Naive thymus-derived CD4-positive, alpha-beta T cell (primary cell): ENCODE measurements at regions of chr3 and their contacts with region 1.

Region 1: DNA sequence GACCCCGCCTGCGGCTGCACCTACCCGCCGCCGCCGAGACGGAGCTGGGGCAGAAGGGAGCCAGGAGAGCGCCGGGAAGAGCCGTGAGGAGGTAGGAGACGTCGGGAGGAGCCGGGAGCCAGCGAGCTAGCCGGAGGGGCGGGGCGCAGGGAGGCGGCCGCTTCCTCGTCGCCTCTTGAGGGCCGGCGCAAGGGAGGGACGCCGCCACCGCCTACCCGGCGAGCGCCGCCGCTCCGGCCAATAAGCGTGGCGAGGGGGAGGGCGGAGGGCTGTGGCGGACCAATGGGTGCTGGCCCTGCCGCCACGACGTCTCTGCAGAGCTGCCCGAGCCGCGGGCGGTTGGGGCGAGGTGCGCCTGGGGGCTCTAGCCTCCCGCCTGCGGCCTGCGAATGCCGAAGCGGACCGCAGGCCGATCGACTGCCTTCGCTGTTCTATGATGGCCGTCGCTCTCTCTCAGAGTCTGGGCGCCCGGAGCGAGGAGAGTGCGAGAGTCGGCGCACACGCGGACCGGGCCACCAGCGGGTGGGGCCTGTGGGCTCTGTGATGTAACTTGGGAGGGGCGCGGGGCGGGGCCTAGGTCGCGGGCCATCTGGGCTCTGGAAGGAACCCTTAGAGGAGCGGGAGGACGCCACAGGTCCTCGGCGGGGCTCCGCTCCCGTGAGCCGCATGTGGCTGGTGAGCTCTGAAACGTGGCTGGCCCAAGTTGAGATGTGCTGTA is 72.7 kb upstream of the MAP4 start:
- DNase-seq: peak; percentile 89 to 96 (median 94)
- ATAC-seq: peak; percentile 97
- H3K4me3 ChIP-seq: peak overlapping the region; percentile 85
- H3K4me3 Mint-ChIP-seq: peak overlapping the region; percentile 90 to 99 (median 96)
- H3K27ac ChIP-seq: peak overlapping the region; percentile 95
- H3K27ac Mint-ChIP-seq: peak overlapping the region; percentile 71 to 99 (median 98)
- H3K4me1 ChIP-seq: peaks cover 7 to 11% of the 10 kb centered on the region in 2 donors
- H3K4me1 Mint-ChIP-seq: peaks cover 14 to 33% (median 29%) of the 10 kb centered on the region in 7 donors
- H3K27me3 ChIP-seq: no peaks in the 10 kb centered on the region
- H3K27me3 Mint-ChIP-seq: peaks cover 0 to 18% (median 0%) of the 10 kb centered on the region in 5 donors

Region 2: DNA sequence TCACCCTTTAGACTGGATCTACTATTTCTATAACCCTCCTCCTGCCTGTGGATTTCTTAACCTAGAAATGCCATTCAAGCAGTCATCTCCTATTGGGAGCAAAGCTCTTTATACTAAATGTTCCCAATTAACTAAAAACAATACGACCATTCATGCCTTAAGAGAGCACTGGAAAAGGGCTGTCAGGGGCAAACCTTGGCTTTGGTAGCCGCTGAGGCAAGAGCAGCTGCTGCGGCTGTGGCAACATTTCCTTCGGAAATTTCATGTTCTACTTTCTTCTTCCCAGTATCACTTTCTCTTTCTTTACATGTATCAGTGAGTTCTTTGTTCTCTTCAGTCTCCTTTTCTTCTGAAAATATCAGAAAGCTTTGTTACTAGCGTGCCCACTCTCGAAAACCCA is 453.9 kb before region 1 on chr3:
- CTCF ChIA-PET with region 1: no interaction called
- POLR2A ChIA-PET with region 1: no interaction called
- intact Hi-C with region 1: no loop called
- DNase-seq: no peak
- ATAC-seq: no peak
- H3K4me3 ChIP-seq: no peak overlapping the region
- H3K4me3 Mint-ChIP-seq: peak overlapping the region in 2 of 10 donors; percentile 0 to 12
- H3K27ac ChIP-seq: no peak overlapping the region
- H3K27ac Mint-ChIP-seq: peak overlapping the region in 3 of 9 donors; percentile 1 to 38 (median 17)
- H3K4me1 ChIP-seq: no peaks in the 10 kb centered on the region
- H3K4me1 Mint-ChIP-seq: peaks cover 0 to 8% (median 3%) of the 10 kb centered on the region in 7 donors
- H3K27me3 ChIP-seq: no peaks in the 10 kb centered on the region
- H3K27me3 Mint-ChIP-seq: no peaks in the 10 kb centered on the region

Region 3: GRCh38 chr3:47802734-47803477 is 286.0 kb before region 1 on chr3 and contains the start of gene DHX30:
- CTCF ChIA-PET with region 1: no interaction called
- POLR2A ChIA-PET with region 1: no interaction called
- intact Hi-C with region 1: loop called in 1 of 2 experiments (anchors 1 kb)
- DNase-seq: peak; percentile 77 to 90 (median 82)
- ATAC-seq: peak; percentile 95
- H3K4me3 ChIP-seq: peak within 1 kb of the TSS; percentile 65
- H3K4me3 Mint-ChIP-seq: peak within 1 kb of the TSS; percentile 89 to 98 (median 95)
- H3K27ac ChIP-seq: peak within 1 kb of the TSS; percentile 92
- H3K27ac Mint-ChIP-seq: peak within 1 kb of the TSS; percentile 92 to 98 (median 95)
- H3K4me1 ChIP-seq: peaks cover 11 to 12% of the 10 kb centered on the region in 2 donors
- H3K4me1 Mint-ChIP-seq: peaks cover 6 to 25% (median 20%) of the 10 kb centered on the region in 7 donors
- H3K27me3 ChIP-seq: no peaks in the 10 kb centered on the region
- H3K27me3 Mint-ChIP-seq: no peaks in the 10 kb centered on the region
- total RNA-seq, gene DHX30: 64.1 to 103 (median 92.0) TPM

Region 4: GRCh38 chr3:47824541-47825473 is 264.1 kb before region 1 on chr3:
- CTCF ChIA-PET with region 1: no interaction called
- POLR2A ChIA-PET with region 1: no interaction called
- intact Hi-C with region 1: loop called in 1 of 2 experiments (anchors 10 kb)
- DNase-seq: peak; percentile 62 to 86 (median 79)
- ATAC-seq: peak; percentile 100
- H3K4me3 ChIP-seq: peak overlapping the region; percentile 79
- H3K4me3 Mint-ChIP-seq: peak overlapping the region; percentile 81 to 94 (median 90)
- H3K27ac ChIP-seq: peak overlapping the region; percentile 88
- H3K27ac Mint-ChIP-seq: peak overlapping the region; percentile 66 to 96 (median 89)
- H3K4me1 ChIP-seq: peaks cover 15% of the 10 kb centered on the region in 2 donors
- H3K4me1 Mint-ChIP-seq: peaks cover 15 to 46% (median 36%) of the 10 kb centered on the region in 7 donors
- H3K27me3 ChIP-seq: no peaks in the 10 kb centered on the region
- H3K27me3 Mint-ChIP-seq: no peaks in the 10 kb centered on the region

Region 5: DNA sequence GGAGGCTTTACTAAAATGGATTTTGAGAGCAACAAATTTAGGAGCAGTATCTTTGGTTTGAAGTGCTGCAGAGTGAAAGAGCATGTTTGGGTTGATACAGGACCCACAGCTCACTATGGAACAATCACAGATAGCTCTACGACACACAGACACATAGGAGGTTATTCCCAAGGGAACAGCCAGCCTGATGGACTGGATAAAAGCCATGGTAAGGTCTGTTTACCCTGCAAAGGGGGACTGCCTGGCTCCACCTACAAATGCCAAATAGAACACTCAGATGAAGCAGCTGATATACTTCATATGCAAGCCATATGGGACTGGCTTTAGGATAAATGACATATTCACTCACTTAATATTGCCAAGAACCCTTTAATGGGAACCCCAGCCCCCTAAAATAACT is 23.9 kb after region 1 on chr3:
- CTCF ChIA-PET with region 1: no interaction called
- POLR2A ChIA-PET with region 1: no interaction called
- intact Hi-C with region 1: loop called in 1 of 2 experiments (anchors 1 kb)
- DNase-seq: no peak
- ATAC-seq: peak; percentile 16
- H3K4me3 ChIP-seq: no peak overlapping the region
- H3K4me3 Mint-ChIP-seq: peak overlapping the region in 6 of 10 donors; percentile 6 to 67 (median 39)
- H3K27ac ChIP-seq: peak overlapping the region; percentile 51
- H3K27ac Mint-ChIP-seq: peak overlapping the region; percentile 17 to 83 (median 65)
- H3K4me1 ChIP-seq: peaks cover 0 to 6% of the 10 kb centered on the region in 2 donors
- H3K4me1 Mint-ChIP-seq: peaks cover 6 to 18% (median 8%) of the 10 kb centered on the region in 7 donors
- H3K27me3 ChIP-seq: no peaks in the 10 kb centered on the region
- H3K27me3 Mint-ChIP-seq: no peaks in the 10 kb centered on the region

Region 6: GRCh38 chr3:48151058-48151806 is 62.3 kb after region 1 on chr3:
- CTCF ChIA-PET with region 1: no interaction called
- POLR2A ChIA-PET with region 1: no interaction called
- intact Hi-C with region 1: loop called in 1 of 2 experiments (anchors 1 kb)
- DNase-seq: peak in 7 of 9 donors; percentile 17 to 61 (median 28)
- ATAC-seq: peak; percentile 80
- H3K4me3 ChIP-seq: no peak overlapping the region
- H3K4me3 Mint-ChIP-seq: no peak overlapping the region
- H3K27ac ChIP-seq: no peak overlapping the region
- H3K27ac Mint-ChIP-seq: no peak overlapping the region
- H3K4me1 ChIP-seq: no peaks in the 10 kb centered on the region
- H3K4me1 Mint-ChIP-seq: peaks cover 0 to 4% (median 0%) of the 10 kb centered on the region in 7 donors
- H3K27me3 ChIP-seq: no peaks in the 10 kb centered on the region
- H3K27me3 Mint-ChIP-seq: no peaks in the 10 kb centered on the region

Region 7: GRCh38 chr3:48240711-48241491 is 152.0 kb after region 1 on chr3 and contains the start of gene ZNF589:
- CTCF ChIA-PET with region 1: no interaction called
- POLR2A ChIA-PET with region 1: no interaction called
- intact Hi-C with region 1: loop called (anchors 1 to 5 kb)
- DNase-seq: peak; percentile 87 to 96 (median 92)
- ATAC-seq: peak; percentile 99
- H3K4me3 ChIP-seq: peak within 1 kb of the TSS; percentile 92
- H3K4me3 Mint-ChIP-seq: peak within 1 kb of the TSS; percentile 82 to 94 (median 92)
- H3K27ac ChIP-seq: peak within 1 kb of the TSS; percentile 79
- H3K27ac Mint-ChIP-seq: peak within 1 kb of the TSS; percentile 88 to 96 (median 93)
- H3K4me1 ChIP-seq: peaks cover 7 to 14% of the 10 kb centered on the region in 2 donors
- H3K4me1 Mint-ChIP-seq: peaks cover 5 to 36% (median 25%) of the 10 kb centered on the region in 7 donors
- H3K27me3 ChIP-seq: no peaks in the 10 kb centered on the region
- H3K27me3 Mint-ChIP-seq: no peaks in the 10 kb centered on the region
- total RNA-seq, gene ZNF589: 37.7 to 64.0 (median 40.2) TPM

Region 8: DNA sequence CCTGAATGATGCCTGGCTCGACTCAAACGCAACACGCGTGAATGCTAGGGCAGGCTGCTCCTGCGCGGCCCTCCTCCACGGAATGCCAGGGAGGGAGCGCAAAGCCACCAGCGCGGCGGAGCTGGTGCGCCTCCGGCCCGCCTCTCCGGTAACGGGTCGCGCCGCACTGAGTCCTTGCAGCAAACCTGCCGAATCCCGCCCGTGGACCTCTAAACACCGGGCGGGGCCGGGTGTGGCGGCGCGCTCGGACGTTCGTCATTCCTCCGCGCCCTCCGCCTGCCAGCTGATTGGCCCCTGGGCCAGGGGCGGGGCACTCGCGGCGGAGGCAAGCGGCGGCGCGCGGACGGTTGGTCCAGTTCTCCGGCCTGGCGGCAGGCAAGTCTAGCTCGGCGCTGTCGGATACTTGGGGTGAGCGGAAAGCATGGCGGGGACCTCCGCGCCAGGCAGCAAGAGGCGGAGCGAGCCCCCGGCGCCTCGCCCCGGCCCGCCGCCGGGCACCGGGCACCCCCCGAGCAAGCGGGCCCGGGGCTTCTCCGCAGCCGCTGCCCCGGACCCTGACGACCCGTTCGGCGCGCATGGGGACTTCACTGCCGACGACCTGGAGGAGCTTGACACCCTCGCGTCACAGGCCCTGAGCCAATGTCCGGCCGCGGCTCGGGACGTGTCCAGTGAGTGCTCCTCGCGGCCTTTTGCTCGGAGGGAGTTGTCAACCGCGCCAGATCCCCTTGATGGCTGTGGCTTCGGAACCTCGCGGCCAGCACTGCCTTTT is 357.7 kb after region 1 on chr3 and contains the start of gene ATRIP:
- CTCF ChIA-PET with region 1: no interaction called
- POLR2A ChIA-PET with region 1: no interaction called
- intact Hi-C with region 1: loop called in 1 of 2 experiments (anchors 2 kb)
- DNase-seq: peak; percentile 73 to 93 (median 81)
- ATAC-seq: peak; percentile 99
- H3K4me3 ChIP-seq: peak within 1 kb of the TSS; percentile 90
- H3K4me3 Mint-ChIP-seq: peak within 1 kb of the TSS; percentile 80 to 95 (median 88)
- H3K27ac ChIP-seq: peak within 1 kb of the TSS; percentile 81
- H3K27ac Mint-ChIP-seq: peak within 1 kb of the TSS; percentile 84 to 97 (median 92)
- H3K4me1 ChIP-seq: peaks cover 20 to 22% of the 10 kb centered on the region in 2 donors
- H3K4me1 Mint-ChIP-seq: peaks cover 17 to 53% (median 45%) of the 10 kb centered on the region in 7 donors
- H3K27me3 ChIP-seq: no peaks in the 10 kb centered on the region
- H3K27me3 Mint-ChIP-seq: no peaks in the 10 kb centered on the region
- total RNA-seq, gene ATRIP: 7.9 to 14.2 (median 12.5) TPM